ENCODE measurements at regions of chrX and their contacts with region 1.

Region 1: DNA sequence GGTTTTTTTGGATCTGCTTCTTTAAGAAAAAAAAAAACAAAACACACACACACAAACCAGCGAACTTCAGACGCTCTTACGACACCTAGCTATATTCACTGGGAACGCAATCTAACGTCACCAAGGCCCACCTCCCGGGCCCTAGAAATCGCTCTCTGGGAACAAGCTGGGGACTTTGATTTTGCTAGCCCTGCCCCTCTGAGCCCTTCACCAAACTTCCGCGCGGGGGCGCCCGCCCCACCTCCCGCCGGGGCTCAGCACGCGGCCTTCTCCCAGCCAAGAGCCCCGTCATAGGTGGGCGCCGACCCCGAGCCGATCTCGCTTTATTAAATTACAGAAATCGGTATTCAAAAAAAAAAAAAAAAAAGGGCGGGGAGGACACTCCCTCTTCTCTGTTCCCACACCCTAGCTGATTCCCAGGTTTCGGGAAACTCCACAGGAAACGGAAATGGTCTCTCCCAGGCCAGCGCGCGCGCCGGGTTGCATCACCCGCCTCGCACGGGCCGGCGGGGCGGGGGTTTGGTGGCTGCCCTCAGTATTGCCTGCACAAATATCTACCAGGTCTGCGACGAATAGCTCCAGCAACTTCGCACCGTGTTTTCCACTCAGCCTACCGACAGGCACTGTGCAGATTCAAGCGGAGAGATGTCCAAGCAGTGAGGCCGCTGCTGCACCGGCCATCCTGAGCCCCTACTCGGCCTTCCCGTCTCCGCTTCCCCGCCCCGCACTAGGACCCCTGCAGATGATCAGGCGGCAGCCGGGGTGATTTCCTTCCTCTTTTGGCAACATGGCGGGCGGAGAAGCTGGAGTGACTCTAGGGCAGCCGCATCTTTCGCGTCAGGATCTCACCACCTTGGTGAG is at the start of gene EIF2S3:
- DNase-seq: peak; percentile 74 to 93 (median 84)
- ATAC-seq: peak; percentile 86 to 88 (median 88)
- H3K4me3 ChIP-seq: peak within 1 kb of the TSS; percentile 85 to 88
- H3K4me3 Mint-ChIP-seq: peak within 1 kb of the TSS in 1 of 3 donors; percentile 96
- H3K27ac ChIP-seq: peak within 1 kb of the TSS; percentile 91
- H3K27ac Mint-ChIP-seq: peak within 1 kb of the TSS; percentile 99 to 100
- H3K4me1 ChIP-seq: peaks cover 2 to 3% of the 10 kb centered on the region in 2 experiments
- H3K4me1 Mint-ChIP-seq: peaks cover 0 to 16% (median 12%) of the 10 kb centered on the region in 3 donors
- H3K27me3 ChIP-seq: no peaks in the 10 kb centered on the region
- H3K27me3 Mint-ChIP-seq: no peaks in the 10 kb centered on the region
- total RNA-seq, gene EIF2S3: 180 to 309 (median 196) TPM

Region 2: DNA sequence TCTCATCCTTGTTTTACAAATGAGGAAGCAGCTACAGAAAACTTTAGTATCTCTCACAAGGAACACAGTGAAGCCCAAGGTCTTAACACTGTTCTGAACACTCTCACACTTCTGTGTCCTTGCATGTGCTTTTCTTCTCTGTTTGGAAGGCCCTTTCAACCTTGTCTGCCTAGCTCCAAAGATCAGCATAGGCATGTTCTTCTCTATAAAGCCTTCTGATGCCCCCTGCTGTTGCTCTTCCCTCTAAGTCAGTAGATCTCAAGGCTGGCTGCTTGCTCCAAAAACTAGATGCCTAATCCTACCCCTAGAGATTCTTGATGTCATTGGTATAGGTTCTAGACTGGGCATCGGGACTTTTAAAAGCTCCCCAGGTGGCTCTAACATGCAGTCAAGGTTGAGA is 152.6 kb before region 1 on chrX:
- CTCF ChIA-PET with region 1: interaction called in 1 of 2 experiments, 33 read pairs
- POLR2A ChIA-PET with region 1: interaction called in 1 of 2 experiments, 3 read pairs
- DNase-seq: peak in 29 of 35 experiments; percentile 1 to 62 (median 24)
- ATAC-seq: peak; percentile 75 to 88 (median 80)
- H3K4me3 ChIP-seq: no peak overlapping the region
- H3K4me3 Mint-ChIP-seq: no peak overlapping the region
- H3K27ac ChIP-seq: no peak overlapping the region
- H3K27ac Mint-ChIP-seq: no peak overlapping the region
- H3K4me1 ChIP-seq: peaks cover 0 to 5% of the 10 kb centered on the region in 2 experiments
- H3K4me1 Mint-ChIP-seq: peaks cover 0 to 11% (median 5%) of the 10 kb centered on the region in 3 donors
- H3K27me3 ChIP-seq: no peaks in the 10 kb centered on the region
- H3K27me3 Mint-ChIP-seq: no peaks in the 10 kb centered on the region

Region 3: DNA sequence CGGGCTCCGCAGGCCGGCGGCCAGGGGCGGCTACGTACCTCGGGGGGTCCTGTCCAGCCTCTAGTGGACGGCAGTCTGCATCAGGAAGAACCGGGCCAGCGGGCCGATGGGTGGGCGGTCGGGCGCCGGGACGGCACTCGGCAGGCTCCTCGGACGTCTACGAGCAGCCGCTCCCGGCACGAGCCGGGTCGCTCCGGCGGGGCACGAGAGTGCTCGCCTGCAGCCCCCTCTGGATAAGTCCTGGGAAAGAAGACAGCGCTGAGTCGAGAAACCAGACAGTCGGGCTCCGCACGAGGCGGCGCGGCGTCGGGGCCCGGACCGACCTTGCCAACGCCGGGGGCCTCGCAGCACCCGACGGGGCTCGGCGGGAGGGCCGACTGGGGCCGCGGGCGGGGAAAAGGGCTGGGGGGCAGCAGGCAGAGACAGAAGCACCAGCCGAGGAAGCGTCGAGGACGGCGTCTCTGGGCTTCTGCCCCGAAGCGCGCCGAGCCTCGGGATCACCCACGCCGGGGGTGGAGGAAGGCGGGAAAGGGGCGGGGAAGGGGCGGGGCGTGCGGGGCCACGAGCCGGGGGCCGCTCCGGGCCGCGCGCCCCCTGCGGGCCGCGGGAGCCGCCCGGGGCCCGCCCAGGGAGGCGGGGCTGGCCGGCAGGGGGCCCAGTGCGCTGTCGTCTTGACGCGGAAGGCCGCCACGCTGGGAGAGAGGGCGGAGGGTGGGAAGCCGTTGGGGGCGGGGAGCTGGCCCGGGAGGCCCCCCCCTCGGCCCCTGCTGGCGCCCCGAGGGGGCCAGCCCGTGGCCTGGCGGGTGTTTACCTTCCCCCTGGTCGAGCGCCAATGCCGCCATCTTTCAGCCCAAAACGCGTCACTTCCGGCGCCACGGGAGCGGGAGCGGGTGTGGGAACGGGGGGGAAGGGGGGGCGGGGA is 29.3 kb before region 1 on chrX:
- CTCF ChIA-PET with region 1: interaction called, 8 to 41 read pairs
- POLR2A ChIA-PET with region 1: interaction called, 3 to 18 read pairs
- DNase-seq: peak; percentile 59 to 86 (median 74)
- ATAC-seq: peak; percentile 87 to 94 (median 88)
- H3K4me3 ChIP-seq: peak overlapping the region; percentile 62 to 89
- H3K4me3 Mint-ChIP-seq: peak overlapping the region; percentile 83 to 88 (median 86)
- H3K27ac ChIP-seq: peak overlapping the region; percentile 32
- H3K27ac Mint-ChIP-seq: no peak overlapping the region
- H3K4me1 ChIP-seq: peaks cover 3 to 5% of the 10 kb centered on the region in 2 experiments
- H3K4me1 Mint-ChIP-seq: peaks cover 20 to 32% (median 24%) of the 10 kb centered on the region in 3 donors
- H3K27me3 ChIP-seq: no peaks in the 10 kb centered on the region
- H3K27me3 Mint-ChIP-seq: peaks cover 0 to 6% of the 10 kb centered on the region in 2 donors

Region 4: DNA sequence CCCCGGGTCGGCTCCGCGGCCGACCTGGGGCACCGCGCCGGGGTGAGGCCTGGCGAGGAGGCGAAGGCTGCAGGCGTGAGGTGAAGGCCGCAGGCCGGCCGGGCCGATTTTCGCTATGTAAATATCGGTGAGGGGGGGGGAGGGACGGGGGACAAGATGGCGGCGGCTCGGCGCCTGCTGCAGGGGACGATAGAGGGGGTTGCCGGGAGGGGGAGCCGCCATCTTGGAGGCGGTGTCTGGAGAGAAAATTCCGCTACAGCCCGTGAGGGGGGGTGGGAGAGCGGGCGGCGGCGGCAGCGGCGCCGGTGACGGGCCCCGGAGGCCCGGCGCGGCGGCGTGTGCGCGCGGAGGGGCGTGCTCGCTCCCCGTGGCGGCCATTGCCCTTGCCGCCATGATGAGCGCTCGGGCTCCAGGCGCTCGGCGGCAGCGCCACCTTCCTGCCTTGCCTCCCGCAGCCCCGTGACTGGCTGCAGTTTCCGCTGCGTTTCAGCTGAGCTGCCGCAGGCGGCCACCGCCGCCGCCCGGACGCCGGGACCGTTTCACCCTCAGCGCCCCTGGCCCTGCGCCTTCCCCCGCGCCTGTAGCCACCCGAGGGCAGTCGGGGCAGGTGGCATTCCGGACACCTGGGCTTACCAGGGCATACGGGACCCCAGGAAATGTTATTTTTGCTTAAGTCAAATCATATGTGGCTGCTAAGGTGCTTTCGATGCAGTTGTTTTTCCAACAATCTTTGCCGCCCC is 95.8 kb after region 1 on chrX:
- CTCF ChIA-PET with region 1: interaction called in 1 of 2 experiments, 5 read pairs
- POLR2A ChIA-PET with region 1: interaction called in 1 of 2 experiments, 10 read pairs
- DNase-seq: peak; percentile 71 to 93 (median 80)
- ATAC-seq: peak; percentile 77 to 84 (median 80)
- H3K4me3 ChIP-seq: peak overlapping the region; percentile 64 to 95
- H3K4me3 Mint-ChIP-seq: peak overlapping the region; percentile 88 to 94 (median 92)
- H3K27ac ChIP-seq: peak overlapping the region; percentile 74
- H3K27ac Mint-ChIP-seq: peak overlapping the region; percentile 91 to 92
- H3K4me1 ChIP-seq: peaks cover 24 to 41% of the 10 kb centered on the region in 2 experiments
- H3K4me1 Mint-ChIP-seq: peaks cover 70 to 79% (median 75%) of the 10 kb centered on the region in 3 donors
- H3K27me3 ChIP-seq: no peaks in the 10 kb centered on the region
- H3K27me3 Mint-ChIP-seq: no peaks in the 10 kb centered on the region